Endothelial cell of umbilical vein (primary cell): ENCODE measurements at regions of chr12 and their contacts with region 1.

Region 1: DNA sequence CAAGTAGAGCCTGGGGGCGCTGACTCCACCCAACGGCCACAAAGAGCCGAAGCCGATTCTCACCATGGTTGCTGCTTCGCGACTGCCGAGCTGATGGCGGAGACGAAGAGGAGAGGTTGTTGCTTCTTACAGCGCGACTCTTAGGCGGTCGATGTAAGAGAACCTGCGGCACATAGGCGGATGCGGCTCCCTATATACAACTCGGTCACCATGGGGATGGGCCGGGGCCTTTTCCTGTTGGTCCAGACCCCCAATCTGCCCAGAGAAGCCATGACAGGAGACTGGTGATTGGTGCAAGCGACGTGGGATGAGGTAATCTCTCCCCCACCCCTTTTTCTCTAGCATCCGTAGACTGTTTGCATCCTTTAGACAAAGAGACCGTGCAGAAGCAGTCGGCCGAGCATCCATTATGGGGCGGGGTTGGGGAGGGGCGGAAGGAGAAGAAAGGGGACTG is at the start of gene TUBA1A:
- DNase-seq: peak; percentile 99
- H3K4me3 ChIP-seq: peak within 1 kb of the TSS; percentile 74 to 95 (median 89)
- H3K27ac ChIP-seq: peak within 1 kb of the TSS; percentile 95
- H3K4me1 ChIP-seq: peaks cover 28% of the 10 kb centered on the region
- H3K27me3 ChIP-seq: no peaks in the 10 kb centered on the region
- CTCF ChIP-seq: no peak
- POLR2A ChIP-seq: peak; percentile 100
- total RNA-seq, gene TUBA1A: 701 and 740 TPM in 2 replicates

Region 2: DNA sequence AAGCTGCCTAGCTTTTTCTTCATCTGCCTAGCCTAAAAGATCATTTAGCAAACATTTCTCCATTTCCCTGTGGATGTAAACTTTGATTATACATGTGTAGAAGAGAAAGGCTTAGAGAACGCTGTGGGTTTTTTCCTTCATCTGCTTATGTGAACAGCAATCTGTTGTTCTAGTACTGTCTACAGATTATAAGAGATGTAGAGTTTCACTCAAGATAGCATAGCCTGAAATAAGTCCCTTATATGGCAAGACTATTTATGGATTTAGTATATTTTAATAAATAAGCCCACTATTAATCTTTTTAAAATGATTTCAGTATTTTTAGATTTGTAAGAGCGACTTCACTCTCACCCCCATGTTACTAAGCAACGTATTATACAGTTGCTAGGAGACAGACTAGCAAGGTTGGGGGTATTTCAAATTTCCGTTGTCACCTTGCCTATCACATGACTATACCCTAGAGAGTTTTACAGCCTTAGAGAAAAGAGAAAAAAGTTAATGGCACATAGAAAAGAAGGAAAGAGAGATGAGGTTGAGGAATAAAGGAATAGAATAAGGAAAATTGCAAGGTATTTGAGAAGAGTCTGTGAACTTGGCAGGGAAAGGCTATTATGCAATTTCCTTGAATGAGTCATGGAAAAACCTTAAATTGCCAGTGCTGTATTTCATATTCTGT is 12.1 kb after region 1 on chr12:
- CTCF ChIA-PET with region 1: interaction called, 16 read pairs
- POLR2A ChIA-PET with region 1: interaction called, 6 read pairs
- dilution Hi-C with region 1: no loop called
- intact Hi-C with region 1: loop called (anchors 1 kb)
- DNase-seq: peak; percentile 93
- H3K4me3 ChIP-seq: peak overlapping the region in 1 of 3 experiments; percentile 44
- H3K27ac ChIP-seq: peak overlapping the region; percentile 74
- H3K4me1 ChIP-seq: peaks cover 33% of the 10 kb centered on the region
- H3K27me3 ChIP-seq: no peaks in the 10 kb centered on the region
- CTCF ChIP-seq: no peak
- POLR2A ChIP-seq: no peak

Region 3: DNA sequence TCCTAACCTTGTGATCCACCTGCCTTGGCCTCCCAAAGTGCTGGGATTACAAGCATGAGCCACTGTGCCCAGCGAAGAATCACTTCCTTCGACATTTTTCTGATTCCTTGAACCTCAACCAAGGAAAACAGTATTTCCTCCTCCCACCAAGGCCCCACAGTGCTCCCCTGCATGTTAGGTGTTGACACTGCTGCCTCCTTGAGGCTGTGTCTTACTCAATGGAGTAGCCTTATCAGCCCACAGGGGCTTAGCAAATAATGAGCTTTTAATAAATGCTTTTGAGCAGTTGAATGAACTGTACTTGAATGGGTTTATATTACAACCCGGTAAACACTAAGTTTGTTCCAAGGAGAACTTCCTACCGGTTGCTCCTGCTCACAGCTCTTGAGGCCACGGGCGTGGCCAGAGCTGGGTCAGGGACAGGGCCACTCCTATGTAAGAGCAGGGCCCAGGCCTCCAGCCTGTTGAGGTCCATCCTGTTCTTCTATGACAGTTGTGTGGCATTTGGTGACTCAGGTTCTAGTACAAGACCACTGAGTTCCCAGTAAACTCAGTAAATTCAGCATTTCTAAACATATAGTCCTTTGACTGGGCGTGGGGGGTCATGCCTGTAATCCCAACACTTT is 36.7 kb after region 1 on chr12:
- CTCF ChIA-PET with region 1: interaction called, 34 read pairs
- POLR2A ChIA-PET with region 1: interaction called, 13 read pairs
- dilution Hi-C with region 1: no loop called
- intact Hi-C with region 1: no loop called
- DNase-seq: peak; percentile 56
- H3K4me3 ChIP-seq: no peak overlapping the region
- H3K27ac ChIP-seq: no peak overlapping the region
- H3K4me1 ChIP-seq: peaks cover 5% of the 10 kb centered on the region
- H3K27me3 ChIP-seq: no peaks in the 10 kb centered on the region
- CTCF ChIP-seq: peak; percentile 17 to 28
- POLR2A ChIP-seq: no peak

Region 4: DNA sequence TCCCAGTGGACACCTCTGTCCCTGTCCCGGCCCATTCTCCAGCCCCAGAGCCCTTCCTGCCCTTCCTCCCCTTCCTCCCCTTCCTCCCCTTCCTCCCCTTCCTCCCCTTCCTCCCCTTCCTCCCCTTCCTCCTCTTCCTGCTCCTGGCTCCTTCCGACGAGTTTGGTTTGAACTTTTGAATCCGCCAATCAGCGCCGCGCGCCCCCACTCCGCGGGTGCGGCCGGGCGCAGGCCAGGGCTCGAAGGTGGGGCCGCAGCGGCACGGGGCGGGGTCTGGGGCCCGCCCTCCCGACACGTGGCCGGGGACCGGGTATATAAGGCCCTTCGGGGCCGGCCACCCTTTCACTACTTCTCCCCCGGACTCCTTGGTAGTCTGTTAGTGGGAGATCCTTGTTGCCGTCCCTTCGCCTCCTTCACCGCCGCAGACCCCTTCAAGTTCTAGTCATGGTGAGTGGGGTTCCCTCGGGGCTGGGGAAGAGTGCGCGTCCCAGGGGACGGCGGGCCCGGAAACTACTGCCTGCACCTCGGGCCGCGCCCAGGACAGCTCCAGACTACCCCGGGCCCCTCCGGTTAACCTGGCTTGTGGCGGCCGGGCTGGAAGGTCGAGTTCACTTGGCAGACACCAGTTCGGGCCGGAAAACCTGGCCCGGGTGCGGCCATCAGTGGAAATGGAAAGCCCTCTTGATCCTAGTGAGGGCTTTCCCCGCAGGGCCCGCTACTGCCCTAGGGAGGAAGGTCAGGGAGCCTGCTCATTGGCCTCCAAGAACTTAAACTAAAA is 76.0 kb after region 1 on chr12 and contains the start of gene TUBA1C:
- CTCF ChIA-PET with region 1: no interaction called
- POLR2A ChIA-PET with region 1: interaction called, 4 read pairs
- dilution Hi-C with region 1: no loop called
- intact Hi-C with region 1: loop called (anchors 1 kb)
- DNase-seq: peak; percentile 89
- H3K4me3 ChIP-seq: peak within 1 kb of the TSS; percentile 68 to 95 (median 83)
- H3K27ac ChIP-seq: peak within 1 kb of the TSS; percentile 83
- H3K4me1 ChIP-seq: peaks cover 46% of the 10 kb centered on the region
- H3K27me3 ChIP-seq: no peaks in the 10 kb centered on the region
- CTCF ChIP-seq: no peak
- POLR2A ChIP-seq: peak; percentile 99
- total RNA-seq, gene TUBA1C: 515 and 523 TPM in 2 replicates

Region 5: GRCh38 chr12:49413796-49414195 is 224.9 kb after region 1 on chr12:
- CTCF ChIA-PET with region 1: no interaction called
- POLR2A ChIA-PET with region 1: no interaction called
- dilution Hi-C with region 1: no loop called
- intact Hi-C with region 1: no loop called
- DNase-seq: no peak
- H3K4me3 ChIP-seq: no peak overlapping the region
- H3K27ac ChIP-seq: no peak overlapping the region
- H3K4me1 ChIP-seq: no peaks in the 10 kb centered on the region
- H3K27me3 ChIP-seq: no peaks in the 10 kb centered on the region
- CTCF ChIP-seq: no peak
- POLR2A ChIP-seq: no peak